Common myeloid progenitor, CD34-positive (primary cell): ENCODE measurements at regions of chr2 and their contacts with region 1.

Region 1: DNA sequence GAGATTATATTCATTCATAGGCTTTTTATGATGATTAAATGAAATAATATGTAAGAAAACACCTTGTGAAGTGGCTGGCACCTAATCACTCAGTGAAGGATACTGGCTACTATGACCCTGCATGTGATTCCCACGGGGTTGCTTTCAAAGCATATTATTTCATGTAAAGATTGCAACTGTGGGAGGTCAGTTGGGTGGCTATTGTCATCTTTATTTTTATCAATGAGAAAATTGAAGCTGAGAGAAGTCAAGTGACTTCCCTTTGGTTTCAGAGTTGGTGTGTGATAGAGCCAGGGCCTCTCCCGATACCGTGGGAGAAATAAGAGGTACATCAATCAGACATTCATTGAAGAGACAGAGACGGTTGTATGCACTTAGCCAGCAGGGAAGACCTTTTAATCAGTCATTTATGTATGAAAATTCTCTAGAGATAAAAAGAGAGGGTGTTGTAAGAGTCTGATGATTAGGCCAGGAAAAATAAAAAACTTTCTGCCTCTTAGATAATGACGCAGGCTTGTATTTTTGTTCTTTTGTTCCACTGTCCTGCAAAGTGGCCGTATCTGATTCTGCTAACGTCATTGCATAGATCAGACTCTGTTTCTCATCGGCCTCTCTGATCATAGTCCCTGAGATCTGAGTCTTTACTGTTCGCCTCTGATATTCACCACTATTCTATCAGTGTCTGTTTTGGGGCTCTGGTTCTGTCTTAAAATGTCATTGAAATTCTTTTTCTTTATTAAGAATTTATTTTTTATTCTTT is 50.5 kb downstream of the QPCT start:
- DNase-seq: no peak
- H3K4me3 ChIP-seq: no peak overlapping the region
- H3K27ac ChIP-seq: no peak overlapping the region
- H3K4me1 ChIP-seq: peaks cover 7 to 29% (median 9%) of the 10 kb centered on the region in 4 experiments
- H3K27me3 ChIP-seq: no peaks in the 10 kb centered on the region

Region 2: GRCh38 chr2:37143974-37144373 is 251.0 kb before region 1 on chr2:
- CTCF ChIA-PET with region 1: no interaction called
- POLR2A ChIA-PET with region 1: no interaction called
- DNase-seq: no peak
- H3K4me3 ChIP-seq: no peak overlapping the region
- H3K27ac ChIP-seq: no peak overlapping the region
- H3K4me1 ChIP-seq: peaks cover 0 to 4% (median 0%) of the 10 kb centered on the region in 4 experiments
- H3K27me3 ChIP-seq: no peaks in the 10 kb centered on the region

Region 3: DNA sequence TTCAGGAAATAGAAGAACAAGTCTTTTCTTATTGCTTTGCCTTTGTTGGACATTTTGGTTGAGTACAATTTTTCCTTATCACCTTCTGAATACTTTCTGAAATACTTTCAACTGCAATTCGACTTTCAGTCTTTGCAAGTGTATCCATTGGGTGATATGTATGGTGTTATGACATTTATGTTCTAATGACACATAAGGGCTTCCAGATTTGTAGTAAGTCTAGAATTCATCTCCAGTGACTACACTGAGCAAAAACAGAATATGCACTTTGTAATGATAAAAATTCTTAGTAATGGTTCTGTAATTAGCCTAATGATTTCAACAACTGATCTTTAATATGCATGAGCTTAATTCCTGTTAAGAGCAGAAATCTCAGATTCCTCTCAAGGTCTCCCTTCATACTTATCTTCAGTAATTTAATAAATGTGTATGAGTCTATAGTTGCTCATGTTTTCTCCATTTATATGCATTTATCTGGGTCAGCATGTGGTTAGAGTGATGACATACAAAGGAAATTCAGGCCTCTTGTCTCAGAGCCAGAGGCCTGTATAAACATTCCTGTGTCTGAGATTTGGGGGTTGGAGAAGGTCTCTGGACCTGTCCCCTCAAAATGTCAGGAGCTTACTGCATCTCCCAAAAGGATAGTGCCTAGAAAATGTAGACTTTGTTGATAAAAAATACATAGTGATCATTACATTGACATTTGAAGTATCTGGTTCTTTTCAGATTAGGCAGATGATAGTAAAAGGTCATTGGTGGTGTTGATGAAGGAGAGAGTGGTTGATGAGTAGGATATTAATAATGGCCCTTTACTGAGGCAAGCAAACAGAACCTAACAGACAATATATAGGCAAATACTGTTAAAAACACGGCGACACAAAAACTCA is 64.4 kb after region 1 on chr2:
- CTCF ChIA-PET with region 1: no interaction called
- POLR2A ChIA-PET with region 1: no interaction called
- DNase-seq: no peak
- H3K4me3 ChIP-seq: no peak overlapping the region
- H3K27ac ChIP-seq: no peak overlapping the region
- H3K4me1 ChIP-seq: peaks cover 0 to 21% (median 16%) of the 10 kb centered on the region in 4 experiments
- H3K27me3 ChIP-seq: no peaks in the 10 kb centered on the region

Region 4: DNA sequence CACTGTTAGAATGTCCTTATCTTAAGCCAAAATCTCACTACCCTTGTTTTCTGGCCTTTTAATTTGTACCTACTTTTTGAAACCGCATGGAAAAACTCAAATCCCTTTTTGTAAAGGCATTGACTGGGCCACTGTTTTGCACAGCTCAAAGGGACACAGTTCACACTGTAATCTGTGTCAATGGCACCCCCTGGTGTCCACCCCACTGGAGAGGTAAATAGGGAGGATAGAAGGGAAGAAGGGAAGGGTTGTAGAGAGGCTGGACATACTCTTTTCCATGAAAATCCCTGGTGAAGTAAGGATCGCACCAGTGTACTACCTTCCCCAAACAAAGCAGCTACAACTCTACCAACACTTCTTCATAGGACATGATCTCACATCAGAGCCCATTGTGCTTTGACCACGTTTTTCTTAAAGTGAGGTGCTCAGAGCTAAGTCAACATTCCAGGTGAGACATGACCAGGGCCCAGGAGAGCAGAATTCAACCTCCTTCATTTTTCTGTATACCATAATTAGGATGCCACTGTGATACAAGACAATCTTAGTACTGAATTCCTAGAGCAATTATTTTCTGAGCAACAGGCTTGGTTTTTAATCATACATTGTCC is 437.7 kb after region 1 on chr2:
- CTCF ChIA-PET with region 1: interaction called, 38 read pairs
- POLR2A ChIA-PET with region 1: no interaction called
- DNase-seq: peak; percentile 80 to 83 (median 80)
- H3K4me3 ChIP-seq: no peak overlapping the region
- H3K27ac ChIP-seq: no peak overlapping the region
- H3K4me1 ChIP-seq: peaks cover 18 to 41% (median 31%) of the 10 kb centered on the region in 4 experiments
- H3K27me3 ChIP-seq: no peaks in the 10 kb centered on the region

Region 5: GRCh38 chr2:37837628-37838328 is 442.8 kb after region 1 on chr2:
- CTCF ChIA-PET with region 1: interaction called, 38 read pairs
- POLR2A ChIA-PET with region 1: no interaction called
- DNase-seq: no peak
- H3K4me3 ChIP-seq: no peak overlapping the region
- H3K27ac ChIP-seq: no peak overlapping the region
- H3K4me1 ChIP-seq: peaks cover 0 to 3% (median 0%) of the 10 kb centered on the region in 4 experiments
- H3K27me3 ChIP-seq: no peaks in the 10 kb centered on the region

Region 6: DNA sequence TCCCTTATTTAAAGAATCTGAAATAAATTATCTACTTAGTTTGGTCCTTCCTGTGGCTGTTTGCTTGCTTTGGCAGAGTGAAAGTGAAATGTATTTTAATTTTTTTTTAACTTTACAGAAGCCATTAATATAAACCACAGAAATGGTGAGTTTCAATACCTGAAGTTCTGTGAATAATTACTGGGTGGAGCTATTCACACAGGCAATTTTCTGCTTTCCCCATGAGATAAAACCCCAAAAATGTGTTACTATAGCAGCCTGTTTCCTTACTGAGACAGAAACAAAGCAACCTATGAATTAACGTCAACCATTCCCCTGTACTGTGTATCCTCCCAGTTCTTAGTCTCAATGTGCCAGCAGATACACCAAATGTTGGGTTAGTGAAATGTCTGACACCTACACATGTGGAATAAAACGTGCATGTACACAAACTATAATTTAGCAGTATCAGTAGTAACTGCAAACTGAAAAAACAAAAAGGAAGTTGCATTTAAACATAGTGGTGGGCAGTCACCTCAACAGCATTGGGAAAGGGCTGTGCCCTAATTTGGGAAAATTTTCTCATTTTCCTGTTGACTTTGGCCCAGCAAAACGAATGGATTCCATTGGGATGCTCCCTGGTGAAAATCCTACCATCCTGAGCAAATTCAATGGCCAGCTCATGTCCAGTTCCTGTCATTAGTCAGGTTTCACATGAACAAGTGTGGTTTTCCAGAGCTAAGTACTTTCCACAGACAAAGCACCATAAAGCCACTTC is 457.0 kb after region 1 on chr2:
- CTCF ChIA-PET with region 1: interaction called, 14 read pairs
- POLR2A ChIA-PET with region 1: no interaction called
- DNase-seq: peak; percentile 42 to 83 (median 71)
- H3K4me3 ChIP-seq: peak overlapping the region in 1 of 7 experiments; percentile 43
- H3K27ac ChIP-seq: peak overlapping the region; percentile 37 to 70
- H3K4me1 ChIP-seq: peaks cover 19 to 68% (median 60%) of the 10 kb centered on the region in 4 experiments
- H3K27me3 ChIP-seq: no peaks in the 10 kb centered on the region